ENCODE measurements at regions of chr4 and their contacts with region 1.

Region 1: DNA sequence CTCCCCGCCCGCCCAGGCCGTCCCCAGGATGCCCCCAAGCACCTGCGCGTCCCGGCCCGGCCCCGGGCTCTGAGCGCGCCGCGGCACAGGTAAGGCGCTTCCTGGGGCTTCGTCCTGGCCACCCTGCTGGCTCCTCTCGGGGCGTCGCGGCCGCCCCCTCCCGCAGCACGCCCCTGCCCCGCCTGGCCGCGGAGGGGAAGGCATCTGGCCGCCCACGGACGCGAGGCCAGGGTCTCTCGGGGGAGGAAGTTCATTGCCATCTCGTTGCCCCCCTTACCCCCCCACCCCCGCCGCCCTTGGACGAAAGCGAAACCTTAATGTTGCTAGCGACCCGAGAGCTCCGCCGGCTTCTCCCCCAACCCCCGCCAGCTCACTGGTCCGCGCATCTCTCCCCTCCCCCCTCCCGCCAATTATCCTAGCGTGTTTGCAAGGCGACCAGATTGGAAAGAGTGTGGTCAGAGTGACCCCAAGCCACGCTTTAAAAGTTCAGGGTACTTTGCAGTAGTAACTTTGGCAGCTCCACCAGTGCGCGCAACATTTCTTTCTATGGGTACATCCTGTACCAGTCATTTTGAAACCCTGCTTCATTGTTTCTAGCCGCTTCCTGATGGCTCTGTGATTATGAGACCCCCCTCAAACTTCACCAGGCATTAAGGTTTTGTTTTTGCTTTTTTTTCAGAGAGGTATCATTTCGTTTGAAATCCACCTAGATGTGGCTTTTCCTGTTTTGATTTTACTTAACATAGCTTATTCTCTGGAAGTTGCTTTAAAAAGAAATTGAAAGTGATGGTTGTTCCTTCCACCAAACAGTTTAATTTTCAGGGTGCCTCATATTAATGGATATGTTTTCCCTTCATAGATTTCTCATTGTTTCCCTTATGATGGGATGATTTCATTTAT is 626 bp downstream of the TBC1D1 start:
- DNase-seq: peak; percentile 74
- H3K4me3 Mint-ChIP-seq: peak overlapping the region; percentile 89
- H3K27ac Mint-ChIP-seq: peak overlapping the region; percentile 86
- H3K4me1 Mint-ChIP-seq: peaks cover 37% of the 10 kb centered on the region
- H3K27me3 Mint-ChIP-seq: peaks cover 8% of the 10 kb centered on the region

Region 2: DNA sequence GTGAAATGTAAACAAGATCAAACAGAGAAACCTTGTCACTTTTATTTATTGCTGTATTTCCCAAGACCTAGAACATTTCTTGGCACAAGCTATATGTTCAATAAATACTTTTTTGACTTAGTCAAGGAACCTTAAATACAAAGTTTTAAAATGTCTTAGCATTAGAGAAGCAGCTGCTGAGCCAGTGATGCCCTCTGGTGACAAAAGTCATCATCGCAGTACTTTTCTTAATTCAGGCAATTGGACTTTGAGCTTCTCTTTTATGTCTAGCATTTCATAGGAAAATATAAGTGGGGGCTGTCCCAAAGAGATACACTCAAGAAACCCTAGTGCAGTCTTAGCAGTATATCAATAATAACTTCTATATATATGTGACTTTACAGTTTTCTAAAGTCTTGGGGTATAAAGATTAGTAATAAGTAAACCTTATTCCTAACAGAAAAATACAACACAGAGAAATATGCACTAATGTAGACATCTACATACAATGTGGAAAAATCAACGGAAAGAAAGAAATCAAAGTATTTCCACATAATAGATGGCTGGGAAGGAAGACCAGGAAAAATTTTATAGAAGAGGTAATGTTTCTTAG is 1491.7 kb before region 1 on chr4:
- CTCF ChIA-PET with region 1: no interaction called
- intact Hi-C with region 1: loop called (anchors 10 kb)
- DNase-seq: peak; percentile 76
- H3K4me3 Mint-ChIP-seq: no peak overlapping the region
- H3K27ac Mint-ChIP-seq: no peak overlapping the region
- H3K4me1 Mint-ChIP-seq: peaks cover 19% of the 10 kb centered on the region
- H3K27me3 Mint-ChIP-seq: no peaks in the 10 kb centered on the region

Region 3: DNA sequence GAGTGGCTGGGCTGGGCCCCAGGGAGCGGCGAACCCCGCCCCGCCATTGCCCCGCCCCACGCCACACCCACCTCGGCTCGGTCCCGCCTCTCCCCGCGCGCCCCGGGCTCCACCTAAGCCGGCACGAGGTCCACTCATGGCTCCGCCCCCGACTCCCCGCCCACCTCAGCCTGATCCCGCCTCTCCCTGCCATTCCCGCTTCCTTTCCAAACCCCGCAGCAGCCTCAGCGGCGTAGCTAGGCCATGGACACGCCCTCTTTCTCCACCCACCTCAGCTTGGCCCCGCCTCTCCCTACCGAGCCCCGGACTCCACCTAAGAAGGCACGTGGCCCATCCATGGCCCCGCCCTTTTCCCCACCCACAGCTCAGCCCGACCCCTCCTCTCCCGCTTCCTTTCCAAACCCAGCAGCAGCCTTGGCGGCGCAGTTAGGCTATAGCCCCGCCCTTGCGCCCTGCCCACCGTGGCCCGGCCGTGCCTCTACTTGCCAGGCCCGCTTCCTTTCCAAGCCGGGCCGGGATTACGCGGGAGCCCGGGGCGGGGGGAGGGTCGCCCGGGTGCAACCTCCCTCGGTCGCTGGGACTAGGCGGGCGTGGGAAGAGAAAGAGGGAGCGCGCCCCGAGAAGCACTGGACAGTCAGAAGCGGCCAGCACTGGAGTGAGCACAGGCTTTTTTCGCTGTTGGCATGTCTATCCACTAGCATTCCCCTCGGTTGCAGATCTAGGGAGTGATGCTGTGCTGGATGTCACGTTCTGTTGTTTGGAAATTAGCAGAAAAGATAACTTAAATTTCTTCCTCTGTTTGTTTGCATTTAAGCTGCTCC is 204.9 kb before region 1 on chr4 and contains the start of gene RELL1:
- CTCF ChIA-PET with region 1: no interaction called
- intact Hi-C with region 1: loop called (anchors 1 kb)
- DNase-seq: peak; percentile 100
- H3K4me3 Mint-ChIP-seq: peak within 1 kb of the TSS; percentile 84
- H3K27ac Mint-ChIP-seq: peak within 1 kb of the TSS; percentile 82
- H3K4me1 Mint-ChIP-seq: peaks cover 34% of the 10 kb centered on the region
- H3K27me3 Mint-ChIP-seq: no peaks in the 10 kb centered on the region
- total RNA-seq, gene RELL1: 8.7 to 10.3 TPM

Region 4: DNA sequence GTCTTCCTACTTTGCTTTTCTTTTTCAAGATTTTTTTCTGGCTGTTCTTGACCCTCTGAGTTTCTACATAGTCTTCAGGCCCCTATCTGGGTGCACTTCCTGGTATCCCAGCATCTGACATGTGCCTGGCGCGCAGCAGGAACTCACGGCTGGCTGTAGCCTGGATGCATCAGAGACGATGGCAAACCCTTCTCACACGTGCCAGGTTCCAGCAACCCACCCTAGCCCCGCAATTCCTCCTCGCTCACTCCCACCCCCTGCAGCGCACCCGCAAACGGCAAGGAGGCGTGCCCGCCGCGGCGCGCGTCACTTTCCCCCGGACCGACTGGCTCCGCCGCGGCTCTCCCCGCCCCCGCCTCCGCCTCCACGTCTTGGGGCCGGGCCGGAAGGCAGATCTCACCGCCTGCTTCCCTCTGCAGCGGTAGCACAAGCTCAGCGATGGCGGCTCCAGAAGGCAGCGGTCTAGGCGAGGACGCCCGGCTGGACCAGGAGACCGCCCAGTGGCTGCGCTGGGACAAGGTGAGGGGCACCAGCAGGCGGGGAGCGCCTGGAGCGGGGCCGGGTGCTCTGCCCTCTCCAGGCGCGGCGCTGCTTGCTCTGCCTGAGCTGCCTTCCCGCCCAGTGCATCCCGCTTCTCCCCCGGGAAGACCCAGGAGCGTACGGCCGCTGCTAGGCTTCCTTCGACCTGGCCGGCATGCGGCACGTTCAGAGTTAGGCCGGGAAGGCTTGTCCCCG is 65.0 kb before region 1 on chr4 and contains the start of gene PGM2:
- CTCF ChIA-PET with region 1: no interaction called
- intact Hi-C with region 1: loop called (anchors 1 kb)
- DNase-seq: peak; percentile 92
- H3K4me3 Mint-ChIP-seq: peak within 1 kb of the TSS; percentile 100
- H3K27ac Mint-ChIP-seq: peak within 1 kb of the TSS; percentile 91
- H3K4me1 Mint-ChIP-seq: peaks cover 33% of the 10 kb centered on the region
- H3K27me3 Mint-ChIP-seq: no peaks in the 10 kb centered on the region
- total RNA-seq, gene PGM2: 53.7 to 53.9 TPM

Region 5: GRCh38 chr4:37977471-37978247 is 86.1 kb after region 1 on chr4:
- CTCF ChIA-PET with region 1: no interaction called
- intact Hi-C with region 1: loop called (anchors 1 kb)
- DNase-seq: peak; percentile 83
- H3K4me3 Mint-ChIP-seq: peak overlapping the region; percentile 77
- H3K27ac Mint-ChIP-seq: peak overlapping the region; percentile 26
- H3K4me1 Mint-ChIP-seq: peaks cover 27% of the 10 kb centered on the region
- H3K27me3 Mint-ChIP-seq: no peaks in the 10 kb centered on the region

Measured in activated naive CD4-positive, alpha-beta T cell treated with anti-CD3 and anti-CD28 coated beads for 36 hours (primary cell).